ENCODE measurements at regions of chr15 and their contacts with region 1.

Region 1: DNA sequence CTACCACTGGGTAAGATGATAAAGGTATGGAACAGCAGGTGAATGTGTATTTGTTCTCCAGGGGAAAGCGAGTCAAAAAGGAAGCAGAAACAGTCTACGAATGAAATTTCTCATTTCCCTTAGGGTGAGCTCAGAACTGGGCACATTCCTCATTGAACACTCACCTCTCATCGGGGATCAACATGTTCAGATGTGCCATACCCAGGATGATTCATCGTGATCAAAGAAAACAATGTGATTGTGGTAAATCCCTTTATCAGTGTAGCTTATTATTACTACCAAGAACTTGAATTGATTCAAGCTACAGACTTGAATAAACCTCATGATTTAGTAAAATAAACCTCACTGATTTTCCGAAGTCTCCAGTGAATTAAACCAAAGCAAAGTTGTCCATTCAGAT is 72.1 kb downstream of the GJD2 start:
- DNase-seq: no peak
- H3K4me3 Mint-ChIP-seq: no peak overlapping the region
- H3K27ac Mint-ChIP-seq: no peak overlapping the region
- H3K4me1 Mint-ChIP-seq: no peaks in the 10 kb centered on the region
- H3K27me3 Mint-ChIP-seq: peaks cover 8% of the 10 kb centered on the region

Region 2: GRCh38 chr15:34621675-34622074 is 61.0 kb before region 1 on chr15:
- CTCF ChIA-PET with region 1: no interaction called
- POLR2A ChIA-PET with region 1: no interaction called
- intact Hi-C with region 1: loop called (anchors 10 kb)
- DNase-seq: no peak
- H3K4me3 Mint-ChIP-seq: no peak overlapping the region
- H3K27ac Mint-ChIP-seq: no peak overlapping the region
- H3K4me1 Mint-ChIP-seq: no peaks in the 10 kb centered on the region
- H3K27me3 Mint-ChIP-seq: peaks cover 21% of the 10 kb centered on the region

Region 3: DNA sequence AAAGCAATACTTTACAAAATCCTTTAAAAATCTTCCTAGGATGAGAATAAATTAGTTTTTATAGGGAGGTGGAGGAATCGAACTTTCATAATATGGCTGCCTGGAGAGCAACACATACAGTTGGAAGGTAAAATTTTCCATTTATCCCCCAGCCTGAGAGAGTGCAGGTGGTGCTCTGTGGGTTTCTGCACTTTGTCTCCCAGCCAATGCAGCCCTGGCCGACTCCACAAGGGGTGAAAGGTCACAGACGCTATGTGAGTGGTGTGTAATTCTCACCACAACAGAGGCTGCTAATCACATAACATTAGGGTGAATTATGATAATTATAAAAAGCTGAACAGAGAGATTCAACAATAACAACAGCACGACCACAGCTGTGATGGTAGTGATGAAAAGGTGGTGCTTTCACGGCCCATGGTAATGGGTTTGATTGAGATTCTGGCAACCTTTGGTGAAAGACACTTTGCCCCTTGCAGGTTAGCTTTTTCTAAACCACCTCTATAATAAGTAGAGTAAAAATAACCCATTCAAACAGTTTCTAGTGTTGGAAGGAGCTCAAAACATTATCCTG is 432.6 kb after region 1 on chr15:
- CTCF ChIA-PET with region 1: no interaction called
- POLR2A ChIA-PET with region 1: no interaction called
- intact Hi-C with region 1: no loop called
- DNase-seq: no peak
- H3K4me3 Mint-ChIP-seq: no peak overlapping the region
- H3K27ac Mint-ChIP-seq: no peak overlapping the region
- H3K4me1 Mint-ChIP-seq: no peaks in the 10 kb centered on the region
- H3K27me3 Mint-ChIP-seq: no peaks in the 10 kb centered on the region